Activated CD4-positive, alpha-beta T cell treated with anti-CD3 and anti-CD28 coated beads, Interleukin-2, amount 10 ng/mL, durations not matched to agents 7 days and 5 days (primary cell): ENCODE measurements at regions of chr10 and their contacts with region 1.

Region 1: GRCh38 chr10:3785257-3785850 is 345 bp upstream of the KLF6 start:
- DNase-seq: peak; percentile 99
- H3K4me3 Mint-ChIP-seq: peak overlapping the region; percentile 93
- H3K27ac Mint-ChIP-seq: peak overlapping the region; percentile 97
- H3K4me1 Mint-ChIP-seq: peaks cover 37% of the 10 kb centered on the region
- H3K27me3 Mint-ChIP-seq: no peaks in the 10 kb centered on the region

Region 2: GRCh38 chr10:3805791-3806461 is 20.6 kb after region 1 on chr10:
- CTCF ChIA-PET with region 1: interaction called, 4 read pairs
- POLR2A ChIA-PET with region 1: interaction called, 46 read pairs
- DNase-seq: peak; percentile 56
- H3K4me3 Mint-ChIP-seq: peak overlapping the region; percentile 51
- H3K27ac Mint-ChIP-seq: no peak overlapping the region
- H3K4me1 Mint-ChIP-seq: peaks cover 58% of the 10 kb centered on the region
- H3K27me3 Mint-ChIP-seq: no peaks in the 10 kb centered on the region

Region 3: GRCh38 chr10:3811291-3811870 is 26.0 kb after region 1 on chr10:
- CTCF ChIA-PET with region 1: interaction called, 5 read pairs
- POLR2A ChIA-PET with region 1: interaction called, 46 read pairs
- DNase-seq: peak; percentile 68
- H3K4me3 Mint-ChIP-seq: peak overlapping the region; percentile 64
- H3K27ac Mint-ChIP-seq: peak overlapping the region; percentile 95
- H3K4me1 Mint-ChIP-seq: peaks cover 86% of the 10 kb centered on the region
- H3K27me3 Mint-ChIP-seq: no peaks in the 10 kb centered on the region

Region 4: DNA sequence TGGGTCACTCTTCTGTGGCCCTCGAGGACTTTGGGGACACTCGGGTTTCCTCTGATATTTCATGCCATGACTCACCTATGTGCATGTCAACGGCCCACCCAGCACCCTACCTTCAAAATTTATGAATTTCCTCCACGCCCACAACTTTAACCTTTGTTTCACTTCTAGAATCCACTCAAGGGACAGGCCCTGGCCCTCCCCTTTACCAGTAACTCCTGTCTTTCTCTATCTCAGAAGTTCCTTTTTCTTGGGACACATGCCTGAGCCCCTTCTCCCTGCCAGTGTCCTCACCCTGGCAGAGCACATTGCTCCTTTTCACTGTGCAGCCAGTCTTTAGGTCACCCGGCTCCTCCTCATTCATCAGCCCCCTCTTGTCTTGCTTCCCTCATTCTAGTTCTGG is 282.2 kb after region 1 on chr10:
- CTCF ChIA-PET with region 1: interaction called, 10 read pairs
- POLR2A ChIA-PET with region 1: no interaction called
- DNase-seq: no peak
- H3K4me3 Mint-ChIP-seq: no peak overlapping the region
- H3K27ac Mint-ChIP-seq: no peak overlapping the region
- H3K4me1 Mint-ChIP-seq: peaks cover 8% of the 10 kb centered on the region
- H3K27me3 Mint-ChIP-seq: no peaks in the 10 kb centered on the region